Dendritic cell treated with granulocyte-macrophage colony-stimulating factor and Interleukin-4, amounts not matched to agents 40 ng/mL and 50 ng/mL, for 4 days (primary cell): ENCODE measurements at regions of chr15 and their contacts with region 1.

Region 1: DNA sequence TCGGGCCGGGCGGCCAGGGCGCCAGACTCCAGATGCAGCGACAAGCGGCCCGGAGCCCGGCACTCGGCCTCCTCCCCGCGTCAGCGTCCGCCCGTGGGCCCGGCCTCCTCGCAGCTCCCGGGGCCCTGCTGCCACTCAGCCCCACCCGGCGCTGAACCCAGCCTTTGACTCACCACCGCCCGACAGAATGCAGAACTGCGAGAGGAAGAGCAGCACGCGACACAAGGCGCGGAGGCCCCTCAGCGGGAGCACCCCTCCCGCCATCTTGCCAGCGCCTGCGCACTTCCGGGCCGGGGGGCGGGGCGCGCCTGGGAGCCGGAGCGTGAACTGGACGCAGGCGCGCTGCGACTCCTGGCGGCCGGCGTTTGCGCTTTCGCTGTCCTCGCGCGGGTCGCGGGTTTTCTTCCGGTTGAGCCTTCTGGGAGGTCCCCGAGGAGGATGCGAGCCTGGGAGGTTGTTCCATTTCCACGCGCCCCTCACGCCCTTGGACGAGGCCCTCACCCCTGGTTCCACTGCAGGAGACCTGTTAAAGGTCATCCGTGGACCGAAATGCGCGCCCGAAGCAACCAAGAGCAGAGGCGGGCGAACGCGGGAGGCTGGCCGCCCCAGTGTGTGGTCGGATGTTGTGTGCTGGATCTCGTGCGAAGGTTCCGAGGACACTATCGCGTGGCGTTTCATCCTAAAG is at the start of gene TM2D3:
- H3K4me3 Mint-ChIP-seq: peak within 1 kb of the TSS; percentile 86
- H3K27ac Mint-ChIP-seq: peak within 1 kb of the TSS; percentile 91
- H3K4me1 Mint-ChIP-seq: peaks cover 26% of the 10 kb centered on the region
- H3K27me3 Mint-ChIP-seq: no peaks in the 10 kb centered on the region

Region 2: DNA sequence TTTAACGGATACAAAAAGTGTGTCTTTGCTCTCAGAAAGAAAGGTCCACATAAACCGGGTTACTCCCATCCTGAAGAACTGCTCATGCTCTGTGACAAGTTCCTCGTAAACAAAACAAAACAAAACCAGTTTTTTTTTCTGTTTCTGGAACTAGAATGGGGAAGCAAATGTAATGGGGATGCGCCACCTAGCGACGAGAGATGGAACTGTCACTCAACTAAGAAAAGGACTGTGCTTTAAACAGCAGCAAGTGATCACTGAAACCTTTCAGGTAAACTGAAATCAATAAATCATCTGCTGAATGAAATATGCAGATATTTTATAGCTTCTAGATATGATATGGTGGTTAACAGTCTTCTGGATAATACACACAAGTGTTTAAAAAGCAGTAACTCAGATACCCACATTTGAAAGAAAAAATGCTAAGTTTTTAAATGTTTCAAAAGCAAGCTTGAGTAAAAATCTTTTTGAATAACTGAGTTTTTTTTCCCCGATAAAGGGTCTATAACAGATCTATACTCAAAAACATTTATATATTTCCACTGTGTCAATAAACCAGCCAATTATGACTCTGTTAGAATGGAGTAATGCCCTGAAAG is 11.0 kb before region 1 on chr15:
- intact Hi-C with region 1: loop called (anchors 1 kb)
- H3K4me3 Mint-ChIP-seq: peak overlapping the region; percentile 47
- H3K27ac Mint-ChIP-seq: peak overlapping the region; percentile 89
- H3K4me1 Mint-ChIP-seq: peaks cover 33% of the 10 kb centered on the region
- H3K27me3 Mint-ChIP-seq: no peaks in the 10 kb centered on the region

Region 3: GRCh38 chr15:101723874-101724674 is 71.8 kb after region 1 on chr15 and contains the start of gene TARS3:
- intact Hi-C with region 1: loop called (anchors 1 kb)
- H3K4me3 Mint-ChIP-seq: peak within 1 kb of the TSS; percentile 79
- H3K27ac Mint-ChIP-seq: peak within 1 kb of the TSS; percentile 80
- H3K4me1 Mint-ChIP-seq: peaks cover 9% of the 10 kb centered on the region
- H3K27me3 Mint-ChIP-seq: no peaks in the 10 kb centered on the region

Region 4: GRCh38 chr15:101827257-101827656 is 175.0 kb after region 1 on chr15:
- intact Hi-C with region 1: no loop called
- H3K4me3 Mint-ChIP-seq: no peak overlapping the region
- H3K27ac Mint-ChIP-seq: no peak overlapping the region
- H3K4me1 Mint-ChIP-seq: no peaks in the 10 kb centered on the region
- H3K27me3 Mint-ChIP-seq: peaks cover 2% of the 10 kb centered on the region